ENCODE measurements at regions of chr6 and their contacts with region 1.

Region 1: GRCh38 chr6:116680975-116681808 is at the start of gene KPNA5:
- DNase-seq: peak; percentile 97
- ATAC-seq: peak; percentile 94
- H3K4me3 Mint-ChIP-seq: peak within 1 kb of the TSS; percentile 86
- H3K27ac Mint-ChIP-seq: peak within 1 kb of the TSS; percentile 99
- H3K4me1 Mint-ChIP-seq: peaks cover 35% of the 10 kb centered on the region
- H3K27me3 Mint-ChIP-seq: no peaks in the 10 kb centered on the region
- CTCF ChIP-seq: no peak
- total RNA-seq, gene KPNA5: 10.3 to 10.9 TPM

Region 2: DNA sequence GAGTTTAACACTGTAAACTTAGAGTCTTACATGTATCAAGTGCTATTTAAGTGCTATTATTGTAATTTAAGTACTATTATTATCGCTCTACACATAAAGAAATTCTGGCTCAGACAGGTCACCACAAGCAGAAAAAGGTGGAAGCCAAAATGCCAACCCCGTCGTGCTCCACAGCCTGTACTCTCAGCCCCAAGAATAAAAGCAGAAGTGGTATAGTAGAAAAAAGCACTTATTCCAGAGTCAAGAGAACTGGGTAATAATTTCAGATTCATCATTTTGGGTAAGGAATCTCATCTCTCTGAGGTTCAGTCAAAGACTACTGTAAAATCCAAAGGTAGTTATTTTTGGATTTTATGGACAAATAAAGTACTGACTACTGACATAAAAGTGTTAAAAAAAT is 13.6 kb before region 1 on chr6:
- CTCF ChIA-PET with region 1: interaction called, 5 read pairs
- POLR2A ChIA-PET with region 1: interaction called, 42 read pairs
- intact Hi-C with region 1: no loop called
- DNase-seq: no peak
- ATAC-seq: no peak
- H3K4me3 Mint-ChIP-seq: peak overlapping the region; percentile 90
- H3K27ac Mint-ChIP-seq: peak overlapping the region; percentile 98
- H3K4me1 Mint-ChIP-seq: peaks cover 31% of the 10 kb centered on the region
- H3K27me3 Mint-ChIP-seq: no peaks in the 10 kb centered on the region
- CTCF ChIP-seq: no peak